Transverse colon (tissue), 4 donors: ENCODE measurements at regions of chr2 and their contacts with region 1.

Region 1: DNA sequence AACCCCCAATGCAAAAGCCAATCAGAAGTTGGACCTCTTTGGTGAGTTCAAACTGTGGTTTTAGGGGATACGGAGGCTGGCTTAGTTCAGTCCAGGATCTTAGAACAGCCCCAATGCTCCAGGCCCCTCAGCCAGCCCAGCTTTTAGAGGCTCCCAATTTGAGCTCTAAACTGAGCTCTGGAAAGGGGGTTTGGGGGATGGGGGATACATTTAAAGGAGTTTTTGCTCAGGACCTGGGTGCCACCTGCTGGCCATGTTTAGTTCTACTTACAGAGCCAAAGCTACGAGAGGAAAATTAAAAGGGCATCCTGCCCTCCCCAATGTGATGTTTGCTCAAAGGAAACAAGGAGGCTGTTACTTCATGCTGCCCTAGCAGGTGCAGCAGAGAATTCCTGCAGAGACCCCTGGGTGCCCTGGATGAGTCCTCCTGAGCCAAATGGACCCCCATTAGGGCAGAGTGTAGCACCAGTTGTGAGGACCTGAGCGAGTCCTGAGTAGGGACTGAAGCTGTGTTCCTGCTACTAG is 15.9 kb upstream of the TMEM214 start:
- DNase-seq: peak; percentile 66
- H3K4me3 ChIP-seq: no peak overlapping the region
- H3K27ac ChIP-seq: peak overlapping the region in 3 of 4 donors; percentile 55 to 73 (median 60)
- H3K4me1 ChIP-seq: peaks cover 19 to 46% (median 41%) of the 10 kb centered on the region in 4 donors
- H3K27me3 ChIP-seq: no peaks in the 10 kb centered on the region
- CTCF ChIP-seq: peak; percentile 63 to 81 (median 66)
- EP300 ChIP-seq: no peak
- POLR2A ChIP-seq: no peak

Region 2: DNA sequence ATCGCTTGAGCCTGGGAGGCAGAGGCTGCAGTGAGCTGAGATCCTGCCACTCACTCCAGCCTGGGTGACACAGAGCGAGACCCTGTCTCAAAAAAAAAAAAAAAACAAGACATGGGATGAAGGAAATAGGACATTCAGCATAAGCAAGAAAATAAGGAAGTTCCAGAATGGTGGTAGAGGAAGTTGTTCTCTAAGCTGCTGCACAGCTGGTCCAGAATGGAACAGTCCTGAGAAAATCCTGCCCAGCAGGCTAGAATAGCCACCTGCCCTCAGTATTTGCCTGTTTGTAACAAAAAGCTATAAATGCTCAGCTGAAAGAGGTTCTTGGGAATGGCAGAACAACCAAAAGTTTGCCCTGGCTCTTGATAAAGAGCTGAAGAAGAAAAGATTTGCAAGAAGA is 57.5 kb before region 1 on chr2:
- in situ Hi-C with region 1: loop called in 2 of 4 experiments (anchors 10 kb)
- intact Hi-C with region 1: loop called (anchors 2 kb)
- DNase-seq: no peak
- H3K4me3 ChIP-seq: no peak overlapping the region
- H3K27ac ChIP-seq: no peak overlapping the region
- H3K4me1 ChIP-seq: peaks cover 0 to 5% (median 3%) of the 10 kb centered on the region in 4 donors
- H3K27me3 ChIP-seq: peaks cover 34% of the 10 kb centered on the region
- CTCF ChIP-seq: no peak
- EP300 ChIP-seq: no peak
- POLR2A ChIP-seq: no peak

Region 3: GRCh38 chr2:27428213-27428977 is 411.5 kb after region 1 on chr2 and contains the start of gene NRBP1:
- in situ Hi-C with region 1: no loop called
- intact Hi-C with region 1: no loop called
- DNase-seq: peak; percentile 95
- H3K4me3 ChIP-seq: peak within 1 kb of the TSS; percentile 79 to 100 (median 97)
- H3K27ac ChIP-seq: peak within 1 kb of the TSS; percentile 96 to 100 (median 100)
- H3K4me1 ChIP-seq: peaks cover 19 to 39% (median 26%) of the 10 kb centered on the region in 4 donors
- H3K27me3 ChIP-seq: no peaks in the 10 kb centered on the region
- CTCF ChIP-seq: no peak
- EP300 ChIP-seq: no peak
- POLR2A ChIP-seq: peak; percentile 98
- total RNA-seq, gene NRBP1: 38.4 to 74.8 (median 66.8) TPM